ENCODE measurements at regions of chr17 and their contacts with region 1.

Region 1: DNA sequence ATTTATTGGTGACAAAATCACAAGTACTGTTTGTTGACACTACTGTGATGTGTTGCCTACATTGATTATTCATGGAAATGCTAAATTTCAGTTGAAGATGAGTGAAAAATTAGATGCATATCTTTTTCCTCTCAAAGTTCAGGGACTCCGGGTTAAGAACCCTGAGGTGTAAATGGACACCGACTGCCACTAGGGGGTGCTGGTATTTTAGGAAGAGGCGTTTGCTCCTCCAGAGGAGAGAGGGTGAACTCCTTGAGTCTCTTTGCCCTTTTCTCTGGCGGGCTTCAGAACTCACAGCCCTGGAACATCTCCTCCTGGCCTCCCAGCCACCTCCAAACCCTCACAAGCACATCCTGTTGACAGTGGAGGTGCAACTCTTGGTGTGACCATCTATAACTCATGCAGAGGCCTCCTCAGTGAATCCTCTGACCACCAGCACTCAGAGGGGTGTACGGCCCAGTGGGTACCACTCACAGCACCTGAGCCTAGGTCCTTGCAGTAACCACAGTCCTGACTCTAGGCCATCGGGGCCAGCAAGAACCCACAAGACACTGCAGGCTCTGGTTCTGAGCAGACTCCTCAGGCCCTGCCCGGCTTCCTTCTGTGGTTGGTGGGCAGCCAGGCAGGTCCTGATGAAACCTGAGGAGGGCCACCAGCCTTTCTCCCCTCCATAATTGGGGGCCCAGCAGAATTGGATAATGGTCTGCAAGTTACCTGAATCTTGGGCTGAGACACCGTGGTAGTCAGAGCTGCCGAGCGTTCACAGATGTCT is 26.2 kb upstream of the PIK3R5 start:
- DNase-seq: peak; percentile 63
- H3K4me3 Mint-ChIP-seq: no peak overlapping the region
- H3K27ac Mint-ChIP-seq: no peak overlapping the region
- H3K4me1 Mint-ChIP-seq: peaks cover 5% of the 10 kb centered on the region
- H3K27me3 Mint-ChIP-seq: no peaks in the 10 kb centered on the region
- CTCF ChIP-seq: peak; percentile 47

Region 2: GRCh38 chr17:8643860-8644506 is 347.7 kb before region 1 on chr17:
- CTCF ChIA-PET with region 1: no interaction called
- POLR2A ChIA-PET with region 1: no interaction called
- intact Hi-C with region 1: no loop called
- DNase-seq: no peak
- H3K4me3 Mint-ChIP-seq: no peak overlapping the region
- H3K27ac Mint-ChIP-seq: no peak overlapping the region
- H3K4me1 Mint-ChIP-seq: no peaks in the 10 kb centered on the region
- H3K27me3 Mint-ChIP-seq: peaks cover 22% of the 10 kb centered on the region
- CTCF ChIP-seq: no peak

Region 3: DNA sequence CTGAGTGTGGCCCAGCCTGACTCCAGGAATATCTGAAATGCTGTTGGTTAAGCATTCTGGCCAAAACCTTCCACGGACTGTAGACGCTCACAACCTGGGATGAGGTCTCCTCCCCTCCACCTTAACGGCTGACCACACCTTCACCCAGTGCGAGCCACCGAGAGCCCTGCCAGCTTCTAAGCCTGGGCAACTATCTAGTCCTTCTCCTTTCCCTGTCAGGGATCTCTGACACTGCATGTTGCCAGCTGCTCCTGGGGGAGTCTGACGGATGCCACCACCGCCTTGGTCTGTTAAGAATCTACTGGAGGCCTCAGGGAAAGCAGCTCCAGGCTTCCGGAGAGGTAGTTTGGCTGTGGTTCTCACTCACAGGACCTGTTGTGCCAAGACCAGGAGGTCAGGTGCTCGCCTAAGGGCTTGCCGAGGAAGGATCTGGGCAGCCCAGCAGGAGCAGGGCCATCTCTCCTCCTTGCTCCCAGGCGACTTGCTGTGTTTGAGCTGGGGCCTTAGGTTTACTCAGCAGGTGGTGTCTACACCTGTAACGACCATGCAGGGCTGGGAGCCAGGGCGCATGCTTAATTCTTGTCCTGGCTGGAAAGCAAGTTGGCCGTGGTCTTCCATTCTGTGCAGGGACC is 141.4 kb after region 1 on chr17:
- CTCF ChIA-PET with region 1: no interaction called
- POLR2A ChIA-PET with region 1: no interaction called
- intact Hi-C with region 1: no loop called
- DNase-seq: no peak
- H3K4me3 Mint-ChIP-seq: no peak overlapping the region
- H3K27ac Mint-ChIP-seq: no peak overlapping the region
- H3K4me1 Mint-ChIP-seq: no peaks in the 10 kb centered on the region
- H3K27me3 Mint-ChIP-seq: no peaks in the 10 kb centered on the region
- CTCF ChIP-seq: no peak

Region 4: DNA sequence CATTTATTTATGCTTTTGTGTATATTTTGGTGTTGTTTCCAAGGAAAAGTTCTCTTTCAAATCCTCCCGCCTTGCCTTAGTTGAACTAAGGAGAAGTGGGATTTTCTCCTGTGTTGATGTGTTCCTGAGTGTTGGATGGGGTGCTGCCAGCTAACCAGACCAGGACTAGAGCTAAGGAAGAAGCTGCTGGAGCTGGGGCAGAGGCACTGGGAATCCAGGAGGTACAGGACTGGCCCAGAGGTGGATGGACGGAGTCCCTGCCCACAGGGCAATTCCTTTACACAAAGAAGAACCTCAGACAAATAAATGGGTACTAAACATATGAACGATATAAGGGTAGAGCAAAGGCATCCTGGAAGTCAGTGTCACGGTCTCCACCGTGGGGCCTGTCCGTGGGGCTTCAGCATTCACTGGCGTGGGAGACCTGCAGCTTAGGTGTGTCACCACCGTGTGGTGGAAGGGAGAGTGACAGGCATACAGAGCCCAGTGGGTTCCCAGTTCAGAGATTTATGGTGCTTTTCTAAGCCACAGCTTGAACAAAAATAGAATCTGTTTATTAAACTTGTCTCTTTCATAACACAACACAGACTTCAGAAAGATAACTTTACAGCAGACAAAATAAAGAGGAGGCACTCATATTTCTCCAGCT is 300.3 kb after region 1 on chr17:
- CTCF ChIA-PET with region 1: interaction called, 13 read pairs
- POLR2A ChIA-PET with region 1: no interaction called
- intact Hi-C with region 1: no loop called
- DNase-seq: peak; percentile 20
- H3K4me3 Mint-ChIP-seq: no peak overlapping the region
- H3K27ac Mint-ChIP-seq: no peak overlapping the region
- H3K4me1 Mint-ChIP-seq: peaks cover 8% of the 10 kb centered on the region
- H3K27me3 Mint-ChIP-seq: no peaks in the 10 kb centered on the region
- CTCF ChIP-seq: peak; percentile 34

Region 5: GRCh38 chr17:9389110-9389509 is 397.4 kb after region 1 on chr17:
- CTCF ChIA-PET with region 1: no interaction called
- POLR2A ChIA-PET with region 1: no interaction called
- intact Hi-C with region 1: loop called (anchors 10 kb)
- DNase-seq: peak; percentile 80
- H3K4me3 Mint-ChIP-seq: no peak overlapping the region
- H3K27ac Mint-ChIP-seq: peak overlapping the region; percentile 89
- H3K4me1 Mint-ChIP-seq: peaks cover 22% of the 10 kb centered on the region
- H3K27me3 Mint-ChIP-seq: no peaks in the 10 kb centered on the region
- CTCF ChIP-seq: no peak

Region 6: DNA sequence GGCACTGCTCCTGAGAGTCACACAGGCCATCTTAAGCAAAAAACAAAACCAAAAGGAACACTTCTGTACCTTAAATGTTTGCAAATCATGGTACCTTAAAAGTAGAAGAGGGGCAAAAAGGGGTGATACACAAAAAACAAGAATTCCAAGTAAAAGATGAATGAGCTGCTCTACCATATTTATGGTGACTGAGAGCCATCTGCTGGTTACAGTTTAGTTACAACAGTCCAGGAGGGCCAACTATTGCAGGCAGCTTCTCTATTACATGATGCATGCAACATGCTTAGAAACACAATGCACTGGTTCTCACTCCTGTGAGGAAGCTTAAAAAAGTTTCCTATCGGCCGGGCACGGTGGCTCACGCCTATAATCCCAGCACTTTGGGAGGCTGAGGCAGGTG is 530.4 kb after region 1 on chr17:
- CTCF ChIA-PET with region 1: interaction called, 55 read pairs
- POLR2A ChIA-PET with region 1: interaction called, 3 read pairs
- intact Hi-C with region 1: loop called (anchors 1 kb)
- DNase-seq: peak; percentile 48
- H3K4me3 Mint-ChIP-seq: no peak overlapping the region
- H3K27ac Mint-ChIP-seq: no peak overlapping the region
- H3K4me1 Mint-ChIP-seq: no peaks in the 10 kb centered on the region
- H3K27me3 Mint-ChIP-seq: no peaks in the 10 kb centered on the region
- CTCF ChIP-seq: peak; percentile 67

Region 7: DNA sequence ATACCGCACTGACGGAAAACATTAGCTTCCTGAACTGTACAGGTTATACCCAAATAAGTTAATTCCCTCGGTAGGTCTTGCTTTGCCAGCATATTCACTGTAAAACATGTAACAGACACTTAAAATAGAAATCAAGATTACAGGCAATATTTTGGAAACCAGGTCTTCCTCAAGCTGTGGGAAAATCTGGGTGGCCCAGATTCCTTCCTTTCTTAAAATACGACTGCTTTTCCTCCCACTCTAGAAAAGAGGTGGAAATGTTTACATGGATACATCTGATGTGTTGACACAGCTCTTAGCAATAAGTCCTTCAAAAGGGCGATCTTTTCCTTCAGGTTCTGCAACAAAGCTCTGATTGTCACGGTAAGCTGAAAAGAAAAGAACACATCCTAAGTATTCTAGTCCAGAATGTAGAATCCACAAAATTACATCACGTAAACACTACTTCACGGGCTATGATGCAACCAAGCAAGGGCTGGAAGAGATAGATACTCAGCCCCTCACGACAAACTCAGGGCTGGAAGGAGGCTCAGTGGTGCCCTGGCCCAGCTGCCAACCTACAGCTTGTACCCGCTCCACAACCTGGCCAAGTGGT is 565.6 kb after region 1 on chr17:
- CTCF ChIA-PET with region 1: interaction called, 3 read pairs
- POLR2A ChIA-PET with region 1: no interaction called
- intact Hi-C with region 1: loop called (anchors 1 kb)
- DNase-seq: no peak
- H3K4me3 Mint-ChIP-seq: no peak overlapping the region
- H3K27ac Mint-ChIP-seq: no peak overlapping the region
- H3K4me1 Mint-ChIP-seq: no peaks in the 10 kb centered on the region
- H3K27me3 Mint-ChIP-seq: no peaks in the 10 kb centered on the region
- CTCF ChIP-seq: no peak

Region 8: GRCh38 chr17:9768381-9768934 is 776.8 kb after region 1 on chr17:
- CTCF ChIA-PET with region 1: no interaction called
- POLR2A ChIA-PET with region 1: no interaction called
- intact Hi-C with region 1: loop called (anchors 10 kb)
- DNase-seq: peak; percentile 57
- H3K4me3 Mint-ChIP-seq: no peak overlapping the region
- H3K27ac Mint-ChIP-seq: no peak overlapping the region
- H3K4me1 Mint-ChIP-seq: peaks cover 4% of the 10 kb centered on the region
- H3K27me3 Mint-ChIP-seq: peaks cover 10% of the 10 kb centered on the region
- CTCF ChIP-seq: peak; percentile 60